ENCODE measurements at regions of chr13 and their contacts with region 1.

Region 1: GRCh38 chr13:50911937-50912795 is 2.6 kb downstream of the RNASEH2B start:
- DNase-seq: peak; percentile 82 to 90 (median 83)
- H3K4me3 ChIP-seq: peak overlapping the region; percentile 73 to 92
- H3K4me3 Mint-ChIP-seq: peak overlapping the region; percentile 82 to 98 (median 94)
- H3K27ac ChIP-seq: peak overlapping the region; percentile 79
- H3K27ac Mint-ChIP-seq: peak overlapping the region; percentile 89 to 98 (median 95)
- H3K4me1 ChIP-seq: peaks cover 69% of the 10 kb centered on the region
- H3K4me1 Mint-ChIP-seq: peaks cover 43 to 59% (median 50%) of the 10 kb centered on the region in 4 donors
- H3K27me3 ChIP-seq: no peaks in the 10 kb centered on the region
- H3K27me3 Mint-ChIP-seq: peaks cover 0 to under 1% of the 10 kb centered on the region in 2 donors

Region 2: GRCh38 chr13:49844181-49844580 is 1068.0 kb before region 1 on chr13:
- CTCF ChIA-PET with region 1: no interaction called
- POLR2A ChIA-PET with region 1: no interaction called
- intact Hi-C with region 1: no loop called
- DNase-seq: no peak
- H3K4me3 ChIP-seq: no peak overlapping the region
- H3K4me3 Mint-ChIP-seq: no peak overlapping the region
- H3K27ac ChIP-seq: no peak overlapping the region
- H3K27ac Mint-ChIP-seq: no peak overlapping the region
- H3K4me1 ChIP-seq: peaks cover 10% of the 10 kb centered on the region
- H3K4me1 Mint-ChIP-seq: peaks cover 5 to 12% (median 6%) of the 10 kb centered on the region in 4 donors
- H3K27me3 ChIP-seq: no peaks in the 10 kb centered on the region
- H3K27me3 Mint-ChIP-seq: peaks cover 2 to 4% of the 10 kb centered on the region in 2 donors

Region 3: DNA sequence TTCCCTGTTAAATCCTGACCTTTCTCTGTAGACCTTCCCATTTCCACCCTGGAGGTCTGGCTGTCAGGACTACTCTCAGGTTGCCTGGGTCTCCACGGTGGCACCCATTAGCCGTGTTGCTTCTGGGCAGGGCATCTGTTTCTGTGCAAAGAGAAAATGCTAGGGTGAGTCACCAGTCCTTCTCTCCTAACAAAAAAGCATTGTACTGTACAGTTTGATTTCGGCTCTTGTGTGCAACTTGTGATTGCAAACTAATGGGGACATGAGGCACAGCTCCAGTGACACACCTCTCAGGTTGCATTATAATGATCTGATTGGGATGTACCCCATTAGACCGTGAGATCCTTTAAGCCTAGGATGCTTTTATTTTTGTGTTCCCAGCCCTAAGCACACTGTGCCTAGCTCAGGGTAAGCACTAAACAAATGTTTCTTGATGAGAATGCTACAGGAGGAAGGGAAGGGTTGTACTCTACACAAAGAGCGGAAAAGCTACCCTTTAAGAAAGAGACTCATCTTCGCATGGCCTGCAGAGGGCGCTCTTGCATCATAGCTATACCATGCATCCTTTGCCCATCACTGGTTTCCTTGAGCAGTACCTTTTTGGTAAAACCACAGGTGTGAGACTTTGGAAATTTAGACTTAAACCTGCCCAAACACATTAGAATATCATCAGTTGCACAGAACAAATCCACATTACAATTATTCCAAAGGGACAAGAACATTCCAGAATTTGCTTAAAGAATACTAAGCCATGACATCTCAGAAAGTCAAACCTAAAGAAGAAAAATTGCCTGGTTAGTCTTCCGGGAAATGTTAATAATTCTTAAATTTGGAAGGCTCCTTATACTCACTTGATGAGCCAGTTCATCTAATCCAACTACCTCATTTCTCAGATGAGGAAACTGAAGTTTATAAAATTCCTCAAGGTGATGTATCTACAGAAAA is 935.6 kb before region 1 on chr13:
- CTCF ChIA-PET with region 1: interaction called, 105 read pairs
- POLR2A ChIA-PET with region 1: interaction called, 13 read pairs
- intact Hi-C with region 1: loop called (anchors 1 kb)
- DNase-seq: peak; percentile 68 to 75 (median 71)
- H3K4me3 ChIP-seq: no peak overlapping the region
- H3K4me3 Mint-ChIP-seq: no peak overlapping the region
- H3K27ac ChIP-seq: no peak overlapping the region
- H3K27ac Mint-ChIP-seq: no peak overlapping the region
- H3K4me1 ChIP-seq: no peaks in the 10 kb centered on the region
- H3K4me1 Mint-ChIP-seq: peaks cover 0 to 5% (median 3%) of the 10 kb centered on the region in 4 donors
- H3K27me3 ChIP-seq: no peaks in the 10 kb centered on the region
- H3K27me3 Mint-ChIP-seq: no peaks in the 10 kb centered on the region

Region 4: GRCh38 chr13:50236898-50237318 is 675.3 kb before region 1 on chr13:
- CTCF ChIA-PET with region 1: interaction called, 7 read pairs
- POLR2A ChIA-PET with region 1: interaction called, 3 read pairs
- intact Hi-C with region 1: loop called (anchors 5 kb)
- DNase-seq: peak; percentile 52 to 74 (median 56)
- H3K4me3 ChIP-seq: peak overlapping the region in 1 of 2 donors; percentile 55
- H3K4me3 Mint-ChIP-seq: peak overlapping the region; percentile 76 to 93 (median 86)
- H3K27ac ChIP-seq: peak overlapping the region; percentile 77
- H3K27ac Mint-ChIP-seq: peak overlapping the region; percentile 83 to 97 (median 95)
- H3K4me1 ChIP-seq: peaks cover 39% of the 10 kb centered on the region
- H3K4me1 Mint-ChIP-seq: peaks cover 32 to 52% (median 37%) of the 10 kb centered on the region in 4 donors
- H3K27me3 ChIP-seq: no peaks in the 10 kb centered on the region
- H3K27me3 Mint-ChIP-seq: no peaks in the 10 kb centered on the region

Region 5: DNA sequence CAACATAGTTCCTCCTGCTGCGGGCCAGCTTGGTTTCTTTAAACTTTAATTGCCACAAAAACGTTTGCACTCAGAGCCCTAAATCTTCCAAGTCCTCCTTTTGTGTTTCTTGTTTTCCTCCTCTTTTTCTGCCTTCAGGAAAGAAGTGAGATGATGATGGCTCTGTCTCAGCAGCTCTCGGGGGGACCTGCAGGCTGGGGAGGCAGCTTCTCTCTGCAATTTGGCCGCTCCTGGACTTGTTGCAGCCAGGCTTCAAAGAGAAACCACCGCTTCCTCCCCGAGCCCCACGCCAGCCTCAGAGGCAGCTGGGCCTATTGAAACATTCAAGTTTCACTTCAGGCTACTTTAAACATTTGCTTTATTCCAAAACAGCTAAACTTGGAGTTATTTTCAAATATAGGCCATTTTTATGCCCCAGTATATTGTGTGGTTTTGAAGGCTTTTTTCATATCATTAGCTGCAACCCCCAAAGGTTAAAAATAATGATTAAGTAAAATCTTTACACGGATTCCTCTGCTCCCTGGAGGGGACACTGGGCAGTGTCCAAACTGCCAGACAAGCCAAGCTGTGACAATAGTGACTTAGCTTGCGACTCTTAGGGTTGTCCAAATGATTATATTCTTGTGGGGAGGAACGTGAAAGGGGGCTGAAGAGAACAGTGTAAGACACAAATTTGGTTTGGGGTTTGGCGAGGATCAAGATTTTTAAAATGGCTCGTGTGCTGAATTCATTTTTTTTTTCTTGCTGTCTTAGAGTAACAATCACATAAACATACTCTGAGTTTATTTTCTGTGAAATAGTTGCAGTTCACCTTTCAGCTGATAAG is 399.5 kb before region 1 on chr13:
- CTCF ChIA-PET with region 1: interaction called, 10 read pairs
- POLR2A ChIA-PET with region 1: interaction called, 3 read pairs
- intact Hi-C with region 1: no loop called
- DNase-seq: peak; percentile 36 to 49 (median 47)
- H3K4me3 ChIP-seq: peak overlapping the region; percentile 14 to 37
- H3K4me3 Mint-ChIP-seq: no peak overlapping the region
- H3K27ac ChIP-seq: peak overlapping the region; percentile 12
- H3K27ac Mint-ChIP-seq: no peak overlapping the region
- H3K4me1 ChIP-seq: peaks cover 20% of the 10 kb centered on the region
- H3K4me1 Mint-ChIP-seq: no peaks in the 10 kb centered on the region
- H3K27me3 ChIP-seq: no peaks in the 10 kb centered on the region
- H3K27me3 Mint-ChIP-seq: no peaks in the 10 kb centered on the region

Region 6: GRCh38 chr13:50801087-50801931 is 110.9 kb before region 1 on chr13:
- CTCF ChIA-PET with region 1: interaction called, 30 read pairs
- POLR2A ChIA-PET with region 1: interaction called, 8 read pairs
- intact Hi-C with region 1: loop called (anchors 1 kb)
- DNase-seq: peak; percentile 61 to 68 (median 62)
- H3K4me3 ChIP-seq: no peak overlapping the region
- H3K4me3 Mint-ChIP-seq: peak overlapping the region in 1 of 8 donors; percentile 22
- H3K27ac ChIP-seq: no peak overlapping the region
- H3K27ac Mint-ChIP-seq: peak overlapping the region in 2 of 7 donors; percentile 39 to 53
- H3K4me1 ChIP-seq: peaks cover 6% of the 10 kb centered on the region
- H3K4me1 Mint-ChIP-seq: peaks cover 5 to 9% (median 6%) of the 10 kb centered on the region in 4 donors
- H3K27me3 ChIP-seq: no peaks in the 10 kb centered on the region
- H3K27me3 Mint-ChIP-seq: no peaks in the 10 kb centered on the region

Region 7: GRCh38 chr13:50893211-50893852 is 18.8 kb before region 1 on chr13:
- CTCF ChIA-PET with region 1: interaction called, 70 read pairs
- POLR2A ChIA-PET with region 1: interaction called, 181 read pairs
- intact Hi-C with region 1: loop called (anchors 1 kb)
- DNase-seq: peak; percentile 43 to 71 (median 59)
- H3K4me3 ChIP-seq: peak overlapping the region; percentile 42 to 50
- H3K4me3 Mint-ChIP-seq: peak overlapping the region; percentile 69 to 85 (median 82)
- H3K27ac ChIP-seq: peak overlapping the region; percentile 69
- H3K27ac Mint-ChIP-seq: peak overlapping the region; percentile 78 to 97 (median 95)
- H3K4me1 ChIP-seq: peaks cover 45% of the 10 kb centered on the region
- H3K4me1 Mint-ChIP-seq: peaks cover 35 to 46% (median 39%) of the 10 kb centered on the region in 4 donors
- H3K27me3 ChIP-seq: no peaks in the 10 kb centered on the region
- H3K27me3 Mint-ChIP-seq: peaks cover 0 to 2% of the 10 kb centered on the region in 2 donors

Region 8: DNA sequence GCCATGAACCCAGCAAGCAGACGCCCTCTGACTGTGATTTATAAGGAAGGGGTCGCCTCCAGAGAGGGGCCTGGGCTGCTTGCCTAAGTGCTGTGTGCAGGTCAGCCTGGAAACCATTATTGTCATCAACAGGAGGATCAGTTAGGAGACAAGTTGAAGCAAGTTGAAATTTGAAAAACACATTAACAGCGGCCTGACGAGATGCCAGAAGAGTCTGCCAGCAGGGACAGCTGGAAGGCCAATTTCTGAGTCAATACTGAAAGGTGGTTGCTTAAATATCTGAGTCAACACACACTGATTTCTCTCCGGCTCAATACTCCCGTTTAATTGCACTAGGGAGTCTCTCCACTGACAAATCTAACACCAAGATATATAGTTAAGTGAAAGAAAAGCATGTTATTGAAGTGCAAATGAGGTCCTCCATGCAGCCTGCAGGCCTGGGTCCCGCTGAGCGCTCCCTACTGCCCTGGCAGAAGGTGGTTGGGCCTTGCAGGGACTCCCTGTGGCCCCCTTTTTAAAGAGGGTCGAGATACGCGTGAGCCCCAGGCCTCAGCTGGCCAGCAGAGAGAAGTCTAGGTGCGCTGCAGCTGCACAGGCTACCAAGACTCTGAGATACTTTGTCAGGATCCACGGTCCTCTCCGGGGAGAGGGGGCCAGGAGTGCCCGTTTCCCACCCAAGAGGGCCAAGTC is 88.5 kb after region 1 on chr13:
- CTCF ChIA-PET with region 1: no interaction called
- POLR2A ChIA-PET with region 1: no interaction called
- intact Hi-C with region 1: no loop called
- DNase-seq: no peak
- H3K4me3 ChIP-seq: no peak overlapping the region
- H3K4me3 Mint-ChIP-seq: no peak overlapping the region
- H3K27ac ChIP-seq: no peak overlapping the region
- H3K27ac Mint-ChIP-seq: no peak overlapping the region
- H3K4me1 ChIP-seq: no peaks in the 10 kb centered on the region
- H3K4me1 Mint-ChIP-seq: no peaks in the 10 kb centered on the region
- H3K27me3 ChIP-seq: peaks cover 5% of the 10 kb centered on the region
- H3K27me3 Mint-ChIP-seq: peaks cover 6 to 19% of the 10 kb centered on the region in 2 donors

Region 9: DNA sequence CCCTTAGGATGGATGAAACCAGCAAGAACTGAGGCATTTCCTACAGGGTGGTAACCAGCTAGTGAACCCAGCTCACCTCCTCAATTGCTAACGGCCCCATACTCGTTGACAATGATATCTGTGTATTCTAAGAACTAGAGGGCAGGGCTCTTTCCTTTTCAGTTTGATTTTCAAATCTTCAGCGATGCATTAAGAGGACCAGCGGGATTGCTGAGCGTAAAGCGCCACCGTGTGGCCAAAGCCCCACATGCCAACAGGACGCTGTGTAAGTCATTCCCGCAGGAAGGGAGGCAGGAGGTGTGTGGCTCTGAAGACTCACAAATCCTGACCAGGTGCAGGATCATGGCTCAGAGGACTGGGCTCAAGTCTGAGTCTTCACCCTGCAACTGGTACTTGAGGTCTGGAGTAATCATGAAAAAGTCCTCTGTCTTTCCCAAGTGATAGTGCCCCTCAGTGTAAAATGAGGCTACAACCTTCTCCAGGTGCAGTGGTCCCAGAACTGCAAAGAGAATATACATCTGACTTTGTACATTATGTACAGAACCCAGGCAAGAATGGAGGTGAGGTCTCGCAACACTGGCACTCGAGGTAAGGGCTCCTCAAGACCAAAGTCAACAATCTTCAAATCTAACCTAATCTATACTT is 158.0 kb after region 1 on chr13:
- CTCF ChIA-PET with region 1: interaction called, 4 read pairs
- POLR2A ChIA-PET with region 1: no interaction called
- intact Hi-C with region 1: loop called (anchors 2 kb)
- DNase-seq: peak; percentile 61 to 69 (median 64)
- H3K4me3 ChIP-seq: no peak overlapping the region
- H3K4me3 Mint-ChIP-seq: no peak overlapping the region
- H3K27ac ChIP-seq: no peak overlapping the region
- H3K27ac Mint-ChIP-seq: peak overlapping the region in 3 of 7 donors; percentile 9 to 24 (median 11)
- H3K4me1 ChIP-seq: peaks cover 7% of the 10 kb centered on the region
- H3K4me1 Mint-ChIP-seq: peaks cover 5 to 8% (median 7%) of the 10 kb centered on the region in 4 donors
- H3K27me3 ChIP-seq: no peaks in the 10 kb centered on the region
- H3K27me3 Mint-ChIP-seq: peaks cover 11 to 13% of the 10 kb centered on the region in 2 donors

Measured in CD4-positive, alpha-beta memory T cell (primary cell).